ENCODE measurements at regions of chr6 and their contacts with region 1.

Region 1: GRCh38 chr6:132300323-132300949 is 100.8 kb downstream of the MOXD1 start:
- DNase-seq: no peak
- H3K4me3 ChIP-seq: no peak overlapping the region
- H3K27me3 ChIP-seq: no peaks in the 10 kb centered on the region
- CTCF ChIP-seq: peak; percentile 61

Region 2: GRCh38 chr6:131923356-131923755 is 377.1 kb before region 1 on chr6:
- CTCF ChIA-PET with region 1: interaction called, 10 read pairs
- POLR2A ChIA-PET with region 1: no interaction called
- DNase-seq: no peak
- H3K4me3 ChIP-seq: no peak overlapping the region
- H3K27me3 ChIP-seq: no peaks in the 10 kb centered on the region
- CTCF ChIP-seq: peak; percentile 61

Region 3: GRCh38 chr6:132286026-132287019 is 14.1 kb before region 1 on chr6:
- CTCF ChIA-PET with region 1: interaction called, 13 read pairs
- POLR2A ChIA-PET with region 1: no interaction called
- DNase-seq: no peak
- H3K4me3 ChIP-seq: no peak overlapping the region
- H3K27me3 ChIP-seq: no peaks in the 10 kb centered on the region; the same call in 1 of the 2 replicates
- CTCF ChIP-seq: no peak

Region 4: GRCh38 chr6:132471788-132472187 is 171.4 kb after region 1 on chr6:
- CTCF ChIA-PET with region 1: interaction called, 10 read pairs
- POLR2A ChIA-PET with region 1: no interaction called
- DNase-seq: no peak
- H3K4me3 ChIP-seq: no peak overlapping the region
- H3K27me3 ChIP-seq: no peaks in the 10 kb centered on the region
- CTCF ChIP-seq: no peak

Region 5: DNA sequence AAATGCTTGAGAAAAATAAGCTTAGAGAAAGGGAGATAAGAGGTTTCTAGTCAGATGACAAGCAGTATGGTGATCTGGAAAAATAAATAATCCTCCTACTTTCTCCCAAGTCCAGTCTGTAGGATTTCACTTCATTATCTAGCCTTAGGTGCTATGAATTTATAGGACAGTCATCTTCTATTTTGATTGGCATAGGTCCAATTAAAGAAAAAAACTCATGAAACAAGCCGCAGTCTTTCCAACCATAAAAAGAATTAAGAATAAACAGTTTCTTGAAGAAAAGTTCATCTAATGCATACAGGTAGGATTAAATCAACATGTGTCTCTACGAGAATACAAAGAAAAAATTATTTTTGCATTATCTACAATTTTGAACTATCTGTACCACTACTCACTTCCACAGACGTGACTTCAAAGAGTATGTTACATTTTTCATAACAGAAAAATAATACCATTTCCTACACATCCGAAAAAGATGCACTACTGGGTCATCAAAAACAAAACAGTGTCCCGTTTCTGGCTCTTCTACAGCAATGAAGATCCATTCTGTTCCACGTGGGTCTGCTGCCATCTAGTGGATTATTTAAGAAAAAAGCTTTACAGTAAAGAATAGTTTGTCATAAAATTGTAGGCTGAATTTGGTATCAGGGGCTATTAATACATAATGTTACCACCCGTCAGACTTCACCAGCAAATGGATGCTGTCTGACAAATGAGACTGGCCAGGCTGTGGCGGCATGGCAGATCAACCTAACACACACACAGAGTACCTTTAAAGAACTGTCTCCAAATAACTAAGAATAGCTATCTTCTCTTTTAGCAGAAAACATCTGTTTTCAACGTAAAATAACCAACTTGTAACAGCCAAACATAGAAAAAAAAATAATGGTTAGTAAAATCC is 183.6 kb after region 1 on chr6:
- CTCF ChIA-PET with region 1: interaction called, 81 read pairs
- POLR2A ChIA-PET with region 1: no interaction called
- DNase-seq: no peak
- H3K4me3 ChIP-seq: no peak overlapping the region
- H3K27me3 ChIP-seq: no peaks in the 10 kb centered on the region
- CTCF ChIP-seq: peak; percentile 57

Region 6: GRCh38 chr6:132490024-132490423 is 189.6 kb after region 1 on chr6:
- CTCF ChIA-PET with region 1: interaction called, 81 read pairs
- POLR2A ChIA-PET with region 1: no interaction called
- DNase-seq: peak; percentile 12
- H3K4me3 ChIP-seq: no peak overlapping the region
- H3K27me3 ChIP-seq: no peaks in the 10 kb centered on the region
- CTCF ChIP-seq: no peak

Measured in BJ (cell line).